ENCODE measurements at regions of chr4 and their contacts with region 1.

Region 1: DNA sequence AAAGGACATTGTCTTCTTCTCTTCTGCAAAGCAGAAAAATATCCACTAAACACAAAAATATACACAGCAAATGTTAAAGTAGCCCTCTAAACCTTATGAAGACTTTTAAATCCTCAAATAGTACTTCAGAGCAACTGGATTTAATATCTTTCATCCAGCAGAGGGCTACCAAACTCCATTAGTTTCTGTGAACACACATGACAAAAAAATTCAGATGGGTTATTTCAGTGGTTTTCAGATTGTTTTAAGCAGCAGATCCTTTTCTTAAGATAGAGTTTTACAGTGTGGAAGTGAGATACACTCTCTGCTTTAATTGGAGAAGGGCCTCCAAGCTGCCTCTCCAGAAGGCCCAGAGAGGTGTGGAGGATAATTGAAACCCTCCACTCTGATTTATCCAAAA is 56.7 kb downstream of the ANK2 start:
- DNase-seq: no peak

Region 2: GRCh38 chr4:112636688-112637551 is 469.2 kb before region 1 on chr4 and contains the starts of genes LARP7 and ZGRF1:
- intact Hi-C with region 1: no loop called
- DNase-seq: peak; percentile 95 to 100 (median 98)

Region 3: DNA sequence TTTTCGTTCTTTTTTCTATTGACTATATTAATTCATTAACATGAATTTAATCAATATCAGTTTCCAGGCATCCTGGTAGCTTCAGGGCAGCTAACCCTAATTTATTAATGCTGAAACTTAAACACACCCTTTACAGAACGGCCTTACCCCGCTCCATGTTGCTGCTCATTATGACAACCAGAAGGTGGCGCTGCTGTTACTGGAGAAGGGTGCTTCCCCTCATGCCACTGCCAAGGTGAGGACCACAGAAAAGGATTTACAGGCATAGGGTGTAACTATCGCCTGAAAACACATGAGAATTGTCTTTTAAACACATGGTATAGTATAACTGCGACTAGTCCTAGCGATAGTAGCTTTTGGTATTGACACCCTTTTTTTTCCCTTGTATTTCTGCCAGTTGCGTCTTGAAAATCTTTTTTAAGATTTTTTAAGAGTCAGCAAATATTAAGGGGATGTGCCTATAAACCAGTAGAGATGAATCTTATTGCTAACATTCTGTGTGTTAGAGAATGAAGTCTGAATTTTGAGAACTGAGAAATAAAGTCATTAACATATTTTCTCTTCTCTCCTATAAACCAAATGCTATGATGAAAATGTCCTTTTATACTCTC is 172.3 kb after region 1 on chr4:
- intact Hi-C with region 1: loop called (anchors 10 kb)
- DNase-seq: peak in 9 of 10 donors; percentile 17 to 92 (median 65)

Region 4: GRCh38 chr4:113411496-113411938 is 305.4 kb after region 1 on chr4:
- intact Hi-C with region 1: no loop called
- DNase-seq: no peak

Measured in posterior cingulate gyrus (tissue), 11 donors.